Activated CD4-positive, alpha-beta memory T cell treated with anti-CD3 and anti-CD28 coated beads, Interleukin-2, amount 10 ng/mL, durations not matched to agents 7 days and 5 days (primary cell): ENCODE measurements at regions of chr4 and their contacts with region 1.

Region 1: DNA sequence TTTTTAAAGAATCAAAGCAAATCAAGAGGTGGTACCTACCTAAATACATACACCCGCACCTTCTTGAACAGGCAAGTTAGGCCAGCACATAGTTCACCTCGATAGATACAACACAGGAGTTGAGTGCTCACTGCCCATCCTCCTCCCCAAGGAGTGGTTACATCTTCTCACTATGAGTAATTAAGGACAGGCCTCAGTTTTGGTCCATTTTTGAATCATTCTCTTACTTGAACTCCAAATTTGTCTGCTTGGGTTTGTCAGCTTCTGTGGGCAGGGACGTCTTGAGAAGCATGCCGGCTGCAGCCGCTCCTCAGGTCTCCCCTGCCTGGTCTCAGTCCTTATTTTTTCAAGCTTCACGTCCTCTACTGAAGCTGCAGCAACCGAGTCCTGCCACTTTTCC is 190.6 kb upstream of the RBPJ start:
- DNase-seq: peak; percentile 45
- H3K4me3 Mint-ChIP-seq: no peak overlapping the region
- H3K27ac Mint-ChIP-seq: peak overlapping the region; percentile 79
- H3K4me1 Mint-ChIP-seq: peaks cover 72% of the 10 kb centered on the region
- H3K27me3 Mint-ChIP-seq: no peaks in the 10 kb centered on the region

Region 2: DNA sequence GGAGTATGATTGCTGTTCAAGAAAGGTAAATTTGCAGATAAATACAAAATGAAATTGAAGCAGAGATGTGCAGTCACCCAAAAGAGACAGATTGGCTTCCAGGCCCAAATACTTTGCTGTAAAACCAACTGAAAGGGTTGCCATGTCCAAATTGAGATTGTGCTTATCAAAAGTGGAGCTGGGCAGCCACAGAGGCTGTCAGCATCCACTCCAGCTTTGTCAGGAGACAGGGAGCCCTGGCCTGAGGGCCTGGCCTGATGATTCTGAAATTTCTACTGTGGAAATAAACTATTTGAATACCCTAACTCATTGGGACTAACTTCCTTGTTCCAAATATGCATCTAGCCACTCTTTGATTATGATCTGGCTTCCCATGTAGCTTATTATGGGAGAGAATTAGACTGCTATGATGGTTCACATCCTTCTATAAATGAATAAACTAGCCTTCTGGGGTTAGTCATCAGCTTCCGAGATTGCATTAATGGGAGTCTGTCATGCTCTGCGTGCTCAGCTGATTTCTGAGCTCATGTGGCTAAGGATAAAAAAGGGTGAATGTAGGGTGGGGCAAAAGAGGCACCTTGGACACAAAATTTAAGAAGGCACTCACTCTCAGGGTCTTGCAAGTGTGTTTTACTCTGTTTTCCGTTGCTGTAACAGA is 426.3 kb before region 1 on chr4:
- CTCF ChIA-PET with region 1: no interaction called
- POLR2A ChIA-PET with region 1: no interaction called
- DNase-seq: no peak
- H3K4me3 Mint-ChIP-seq: no peak overlapping the region
- H3K27ac Mint-ChIP-seq: no peak overlapping the region
- H3K4me1 Mint-ChIP-seq: no peaks in the 10 kb centered on the region
- H3K27me3 Mint-ChIP-seq: peaks cover 3% of the 10 kb centered on the region

Region 3: GRCh38 chr4:26113339-26113940 is 16.7 kb before region 1 on chr4:
- CTCF ChIA-PET with region 1: no interaction called
- POLR2A ChIA-PET with region 1: no interaction called
- DNase-seq: no peak
- H3K4me3 Mint-ChIP-seq: no peak overlapping the region
- H3K27ac Mint-ChIP-seq: no peak overlapping the region
- H3K4me1 Mint-ChIP-seq: no peaks in the 10 kb centered on the region
- H3K27me3 Mint-ChIP-seq: no peaks in the 10 kb centered on the region

Region 4: GRCh38 chr4:26144526-26145155 is 14.5 kb after region 1 on chr4:
- CTCF ChIA-PET with region 1: interaction called, 4 read pairs
- POLR2A ChIA-PET with region 1: interaction called, 13 read pairs
- DNase-seq: no peak
- H3K4me3 Mint-ChIP-seq: peak overlapping the region; percentile 38
- H3K27ac Mint-ChIP-seq: peak overlapping the region; percentile 78
- H3K4me1 Mint-ChIP-seq: peaks cover 71% of the 10 kb centered on the region
- H3K27me3 Mint-ChIP-seq: no peaks in the 10 kb centered on the region

Region 5: DNA sequence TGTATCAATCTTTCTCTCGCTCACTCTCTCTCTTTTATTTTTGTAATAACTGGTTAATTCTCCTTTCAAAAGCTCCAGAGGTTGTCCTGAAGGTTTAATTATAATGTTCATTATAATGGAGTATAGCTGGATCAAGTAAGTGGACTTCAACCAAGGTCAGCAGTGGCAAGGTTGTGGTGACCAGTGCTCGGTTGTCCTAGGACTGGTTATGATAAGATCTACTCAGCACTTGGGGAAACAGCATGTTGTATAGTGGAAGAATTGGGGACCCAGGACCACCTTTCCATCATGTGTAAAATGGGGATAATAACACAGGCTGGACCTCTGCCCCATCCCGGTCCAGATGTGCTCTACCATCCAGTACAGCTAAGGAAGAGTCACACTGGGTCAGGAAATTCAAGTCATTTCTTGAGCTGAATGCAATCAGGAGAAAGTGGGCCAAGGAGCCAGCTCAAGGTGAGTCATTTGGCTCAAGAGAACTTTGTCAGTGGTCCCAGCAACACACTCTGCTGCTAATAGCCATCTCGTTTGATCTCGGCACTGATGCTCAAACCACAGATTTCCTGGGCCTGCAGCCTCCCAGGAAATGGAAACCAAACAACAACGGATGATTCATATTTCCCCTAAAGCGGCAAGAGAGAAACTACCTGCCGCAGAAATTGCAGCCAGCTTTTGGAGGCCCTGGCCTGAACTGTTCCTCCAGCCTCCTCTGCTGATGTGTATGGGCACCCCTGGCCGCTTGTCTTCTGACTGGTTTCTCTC is 67.0 kb after region 1 on chr4:
- CTCF ChIA-PET with region 1: no interaction called
- POLR2A ChIA-PET with region 1: interaction called, 27 read pairs
- DNase-seq: peak; percentile 87
- H3K4me3 Mint-ChIP-seq: peak overlapping the region; percentile 62
- H3K27ac Mint-ChIP-seq: peak overlapping the region; percentile 91
- H3K4me1 Mint-ChIP-seq: peaks cover 69% of the 10 kb centered on the region
- H3K27me3 Mint-ChIP-seq: peaks cover 23% of the 10 kb centered on the region